ENCODE measurements at regions of chr19 and their contacts with region 1.

Region 1: DNA sequence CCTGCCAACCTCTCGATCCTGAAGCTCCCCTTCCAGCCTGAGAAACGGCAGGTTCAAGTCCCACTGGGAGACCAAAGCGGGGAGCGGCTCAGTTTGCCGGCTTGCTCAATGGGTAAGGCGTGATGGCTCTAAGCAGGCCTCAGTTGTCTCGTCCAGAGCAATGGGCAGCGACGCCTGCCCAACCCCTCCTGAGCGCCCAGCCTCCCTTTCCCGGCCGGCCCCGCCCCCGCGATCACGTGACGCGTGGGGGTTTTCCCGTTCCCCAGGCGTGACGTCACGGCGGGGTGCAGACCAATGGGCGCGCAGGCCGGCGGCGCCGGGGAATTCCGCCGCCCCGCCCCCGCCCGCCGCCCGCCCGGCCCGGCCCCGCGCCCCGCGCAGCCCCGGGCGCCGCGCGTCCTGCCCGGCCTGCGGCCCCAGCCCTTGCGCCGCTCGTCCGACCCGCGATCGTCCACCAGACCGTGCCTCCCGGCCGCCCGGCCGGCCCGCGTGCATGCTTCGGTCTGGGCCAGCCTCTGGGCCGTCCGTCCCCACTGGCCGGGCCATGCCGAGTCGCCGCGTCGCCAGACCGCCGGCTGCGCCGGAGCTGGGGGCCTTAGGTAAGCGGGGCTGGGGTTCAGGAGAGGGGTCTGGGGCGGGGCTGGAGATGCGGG is at the start of gene RELB:
- DNase-seq: peak; percentile 90 to 98 (median 94)
- ATAC-seq: peak; percentile 55
- H3K4me3 ChIP-seq: peak within 1 kb of the TSS; percentile 58
- H3K4me3 Mint-ChIP-seq: peak within 1 kb of the TSS; percentile 100
- H3K27ac ChIP-seq: peak within 1 kb of the TSS; percentile 98 to 100
- H3K27ac Mint-ChIP-seq: peak within 1 kb of the TSS; percentile 100
- H3K4me1 ChIP-seq: peaks cover 18% of the 10 kb centered on the region
- H3K4me1 Mint-ChIP-seq: peaks cover 10% of the 10 kb centered on the region
- H3K27me3 ChIP-seq: no peaks in the 10 kb centered on the region
- H3K27me3 Mint-ChIP-seq: no peaks in the 10 kb centered on the region
- CTCF ChIP-seq: no peak
- total RNA-seq, gene RELB: 91.6 to 92.5 TPM

Region 2: GRCh38 chr19:44824761-44825160 is 176.5 kb before region 1 on chr19:
- CTCF ChIA-PET with region 1: no interaction called
- POLR2A ChIA-PET with region 1: no interaction called
- intact Hi-C with region 1: no loop called
- DNase-seq: no peak
- ATAC-seq: no peak
- H3K4me3 ChIP-seq: no peak overlapping the region
- H3K4me3 Mint-ChIP-seq: no peak overlapping the region
- H3K27ac ChIP-seq: no peak overlapping the region
- H3K27ac Mint-ChIP-seq: no peak overlapping the region
- H3K4me1 ChIP-seq: no peaks in the 10 kb centered on the region
- H3K4me1 Mint-ChIP-seq: no peaks in the 10 kb centered on the region
- H3K27me3 ChIP-seq: peaks cover 0 to 2% of the 10 kb centered on the region in 2 experiments
- H3K27me3 Mint-ChIP-seq: peaks cover 4% of the 10 kb centered on the region
- CTCF ChIP-seq: no peak

Region 3: GRCh38 chr19:44841231-44841630 is 160.0 kb before region 1 on chr19:
- CTCF ChIA-PET with region 1: no interaction called
- POLR2A ChIA-PET with region 1: no interaction called
- intact Hi-C with region 1: no loop called
- DNase-seq: no peak
- ATAC-seq: no peak
- H3K4me3 ChIP-seq: no peak overlapping the region
- H3K4me3 Mint-ChIP-seq: no peak overlapping the region
- H3K27ac ChIP-seq: no peak overlapping the region
- H3K27ac Mint-ChIP-seq: no peak overlapping the region
- H3K4me1 ChIP-seq: peaks cover 30% of the 10 kb centered on the region
- H3K4me1 Mint-ChIP-seq: peaks cover 17% of the 10 kb centered on the region
- H3K27me3 ChIP-seq: peaks cover 0 to 3% of the 10 kb centered on the region in 2 experiments
- H3K27me3 Mint-ChIP-seq: peaks cover 9% of the 10 kb centered on the region
- CTCF ChIP-seq: no peak

Region 4: GRCh38 chr19:44890366-44891015 is 110.7 kb before region 1 on chr19:
- CTCF ChIA-PET with region 1: no interaction called
- POLR2A ChIA-PET with region 1: interaction called, 11 read pairs
- intact Hi-C with region 1: loop called in 1 of 2 experiments (anchors 1 kb)
- DNase-seq: peak in 9 of 14 experiments; percentile 100
- ATAC-seq: peak; percentile 78
- H3K4me3 ChIP-seq: peak overlapping the region; percentile 63
- H3K4me3 Mint-ChIP-seq: peak overlapping the region; percentile 82
- H3K27ac ChIP-seq: peak overlapping the region; percentile 94 to 95
- H3K27ac Mint-ChIP-seq: peak overlapping the region; percentile 83
- H3K4me1 ChIP-seq: peaks cover 24% of the 10 kb centered on the region
- H3K4me1 Mint-ChIP-seq: peaks cover 25% of the 10 kb centered on the region
- H3K27me3 ChIP-seq: no peaks in the 10 kb centered on the region
- H3K27me3 Mint-ChIP-seq: no peaks in the 10 kb centered on the region
- CTCF ChIP-seq: no peak

Region 5: GRCh38 chr19:44988896-44989556 is 12.2 kb before region 1 on chr19:
- CTCF ChIA-PET with region 1: interaction called, 3 read pairs
- POLR2A ChIA-PET with region 1: interaction called, 10 read pairs
- intact Hi-C with region 1: no loop called
- DNase-seq: peak; percentile 46 to 83 (median 63)
- ATAC-seq: peak; percentile 90
- H3K4me3 ChIP-seq: no peak overlapping the region
- H3K4me3 Mint-ChIP-seq: no peak overlapping the region
- H3K27ac ChIP-seq: no peak overlapping the region
- H3K27ac Mint-ChIP-seq: no peak overlapping the region
- H3K4me1 ChIP-seq: no peaks in the 10 kb centered on the region
- H3K4me1 Mint-ChIP-seq: no peaks in the 10 kb centered on the region
- H3K27me3 ChIP-seq: no peaks in the 10 kb centered on the region
- H3K27me3 Mint-ChIP-seq: no peaks in the 10 kb centered on the region
- CTCF ChIP-seq: peak; percentile 48

Region 6: DNA sequence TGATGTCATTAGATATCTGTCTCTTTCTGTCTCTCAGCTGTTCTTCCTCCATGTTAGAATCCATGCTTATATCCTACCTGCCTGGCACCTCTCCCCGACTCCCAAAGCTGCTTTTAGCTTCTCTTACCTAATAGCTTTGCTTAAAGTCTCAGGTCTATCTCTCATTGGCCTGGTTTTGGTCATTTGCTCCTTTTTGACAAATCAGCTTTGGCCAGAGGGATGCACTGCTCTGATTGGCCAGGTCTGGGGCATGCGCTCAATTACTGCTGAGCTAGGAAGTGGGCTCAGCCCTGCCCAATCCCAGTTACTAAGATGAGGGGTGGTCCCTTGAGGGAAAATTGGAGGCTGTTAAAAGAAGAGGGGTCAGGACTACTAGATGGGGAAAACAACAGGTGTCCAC is 26.2 kb after region 1 on chr19:
- CTCF ChIA-PET with region 1: no interaction called
- POLR2A ChIA-PET with region 1: no interaction called
- intact Hi-C with region 1: no loop called
- DNase-seq: no peak
- ATAC-seq: no peak
- H3K4me3 ChIP-seq: no peak overlapping the region
- H3K4me3 Mint-ChIP-seq: no peak overlapping the region
- H3K27ac ChIP-seq: no peak overlapping the region
- H3K27ac Mint-ChIP-seq: no peak overlapping the region
- H3K4me1 ChIP-seq: no peaks in the 10 kb centered on the region
- H3K4me1 Mint-ChIP-seq: no peaks in the 10 kb centered on the region
- H3K27me3 ChIP-seq: no peaks in the 10 kb centered on the region
- H3K27me3 Mint-ChIP-seq: no peaks in the 10 kb centered on the region
- CTCF ChIP-seq: no peak

Region 7: DNA sequence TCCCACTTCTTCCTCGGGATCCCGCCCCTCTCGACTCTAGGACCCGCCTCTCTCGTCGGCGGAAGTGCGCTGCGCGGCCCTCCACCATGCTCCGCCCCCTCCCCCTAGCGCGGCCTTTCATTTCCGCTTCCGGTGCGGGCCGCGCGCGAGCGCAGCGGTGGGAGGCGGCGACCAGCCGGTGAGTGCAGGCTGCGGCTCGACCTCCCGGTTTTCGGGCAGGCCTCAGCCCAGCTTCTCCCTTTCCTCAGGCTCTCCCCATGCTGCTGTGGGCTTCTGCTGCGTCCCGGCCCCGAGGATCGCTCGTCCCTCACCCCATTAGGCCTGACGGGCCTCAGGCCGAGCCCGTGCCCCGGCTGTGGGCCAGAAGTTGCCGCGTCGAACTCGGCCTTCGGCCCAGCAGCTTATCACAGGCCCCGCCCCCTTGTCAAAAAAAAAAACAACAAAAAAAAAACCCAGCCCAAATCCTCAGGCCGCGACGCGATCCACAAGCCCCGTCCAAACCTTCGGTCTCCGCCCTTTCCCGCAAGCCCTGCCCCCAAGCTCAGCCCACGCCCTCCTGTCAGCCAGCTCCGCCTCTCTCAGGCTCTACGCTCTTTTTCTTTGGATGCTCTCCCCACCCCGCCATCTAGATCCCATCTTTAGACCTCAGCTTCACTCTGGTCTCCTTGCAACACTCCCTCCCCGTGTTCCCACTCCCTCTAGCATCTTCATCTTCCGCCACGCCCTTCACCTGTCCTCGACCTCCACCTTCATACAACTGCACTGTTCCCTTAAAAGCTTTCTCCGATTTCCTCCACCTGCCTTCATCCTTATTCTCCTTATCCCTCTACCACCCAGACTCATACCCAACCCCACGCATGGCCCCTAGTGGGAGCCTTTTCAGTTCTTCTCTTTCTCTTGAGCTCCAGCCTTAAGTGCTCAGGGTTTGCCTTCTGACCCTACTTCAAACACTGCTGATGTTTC is 38.0 kb after region 1 on chr19 and contains the start of gene CLASRP:
- CTCF ChIA-PET with region 1: no interaction called
- POLR2A ChIA-PET with region 1: interaction called, 24 read pairs
- intact Hi-C with region 1: loop called (anchors 1 kb)
- DNase-seq: peak; percentile 78 to 95 (median 85)
- ATAC-seq: peak; percentile 87
- H3K4me3 ChIP-seq: peak within 1 kb of the TSS; percentile 98
- H3K4me3 Mint-ChIP-seq: peak within 1 kb of the TSS; percentile 99
- H3K27ac ChIP-seq: peak within 1 kb of the TSS; percentile 91 to 99
- H3K27ac Mint-ChIP-seq: peak within 1 kb of the TSS; percentile 96
- H3K4me1 ChIP-seq: peaks cover 46% of the 10 kb centered on the region
- H3K4me1 Mint-ChIP-seq: peaks cover 34% of the 10 kb centered on the region
- H3K27me3 ChIP-seq: no peaks in the 10 kb centered on the region
- H3K27me3 Mint-ChIP-seq: no peaks in the 10 kb centered on the region
- CTCF ChIP-seq: no peak
- total RNA-seq, gene CLASRP: 152 to 154 TPM

Region 8: GRCh38 chr19:45079063-45079910 is 78.1 kb after region 1 on chr19 and contains the start of gene GEMIN7:
- CTCF ChIA-PET with region 1: no interaction called
- POLR2A ChIA-PET with region 1: no interaction called
- intact Hi-C with region 1: no loop called
- DNase-seq: peak; percentile 61 to 89 (median 73)
- ATAC-seq: peak; percentile 72
- H3K4me3 ChIP-seq: peak within 1 kb of the TSS; percentile 93
- H3K4me3 Mint-ChIP-seq: peak within 1 kb of the TSS; percentile 93
- H3K27ac ChIP-seq: peak within 1 kb of the TSS; percentile 41 to 75
- H3K27ac Mint-ChIP-seq: peak within 1 kb of the TSS; percentile 79
- H3K4me1 ChIP-seq: peaks cover 62% of the 10 kb centered on the region
- H3K4me1 Mint-ChIP-seq: peaks cover 45% of the 10 kb centered on the region
- H3K27me3 ChIP-seq: no peaks in the 10 kb centered on the region
- H3K27me3 Mint-ChIP-seq: no peaks in the 10 kb centered on the region
- CTCF ChIP-seq: no peak
- total RNA-seq, gene GEMIN7: 4.0 to 4.8 TPM

Region 9: GRCh38 chr19:45250832-45251451 is 249.7 kb after region 1 on chr19 and contains the start of gene MARK4:
- CTCF ChIA-PET with region 1: no interaction called
- POLR2A ChIA-PET with region 1: no interaction called
- intact Hi-C with region 1: loop called in 1 of 2 experiments (anchors 5 kb)
- DNase-seq: peak; percentile 32 to 84 (median 52)
- ATAC-seq: peak; percentile 71
- H3K4me3 ChIP-seq: peak within 1 kb of the TSS; percentile 83
- H3K4me3 Mint-ChIP-seq: peak within 1 kb of the TSS; percentile 90
- H3K27ac ChIP-seq: no peak within 1 kb of the TSS
- H3K27ac Mint-ChIP-seq: peak within 1 kb of the TSS; percentile 72
- H3K4me1 ChIP-seq: peaks cover 56% of the 10 kb centered on the region
- H3K4me1 Mint-ChIP-seq: peaks cover 35% of the 10 kb centered on the region
- H3K27me3 ChIP-seq: no peaks in the 10 kb centered on the region
- H3K27me3 Mint-ChIP-seq: no peaks in the 10 kb centered on the region
- CTCF ChIP-seq: no peak
- total RNA-seq, gene MARK4: 18.1 to 19.8 TPM